Activated CD4-positive, alpha-beta memory T cell treated with anti-CD3 and anti-CD28 coated beads for 36 hours (primary cell): ENCODE measurements at regions of chr16 and their contacts with region 1.

Region 1: DNA sequence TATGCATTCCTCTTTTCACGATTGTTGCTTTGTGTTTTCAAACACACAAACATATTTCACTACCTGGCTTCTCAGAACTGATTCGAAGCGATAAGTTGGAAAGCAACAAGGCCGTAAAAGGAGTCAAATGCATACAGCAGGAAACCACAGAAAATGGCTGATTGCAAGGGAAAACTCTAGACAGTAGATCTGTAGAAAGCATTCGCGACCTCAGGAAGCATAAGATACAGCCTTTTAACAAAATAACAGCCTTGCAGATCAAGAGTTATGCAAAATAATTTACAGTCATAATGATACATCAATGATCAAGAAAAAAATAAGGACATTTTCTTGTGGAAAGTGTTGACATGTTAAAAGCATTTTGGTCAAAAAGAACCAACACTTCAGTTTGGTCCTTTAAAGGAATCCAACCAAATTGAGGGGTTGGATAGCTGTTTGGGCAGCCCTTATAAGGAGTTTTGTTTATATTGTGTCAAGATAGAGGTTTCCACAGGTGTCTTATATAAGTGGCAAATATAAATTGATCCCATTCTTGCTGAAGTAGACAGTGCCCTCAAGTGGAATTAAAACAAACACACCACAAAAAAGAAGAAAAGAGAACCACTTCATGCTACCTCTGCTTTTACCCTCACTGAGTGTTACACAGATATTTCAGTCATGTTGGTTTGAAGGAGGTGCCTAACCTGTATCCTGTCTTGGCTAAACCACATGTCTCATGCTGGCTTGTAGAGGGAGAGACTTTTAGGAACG is 5.5 kb downstream of the CYLD start:
- DNase-seq: no peak
- H3K4me3 Mint-ChIP-seq: peak overlapping the region; percentile 73
- H3K27ac Mint-ChIP-seq: peak overlapping the region; percentile 97
- H3K4me1 Mint-ChIP-seq: peaks cover 64% of the 10 kb centered on the region
- H3K27me3 Mint-ChIP-seq: no peaks in the 10 kb centered on the region

Region 2: DNA sequence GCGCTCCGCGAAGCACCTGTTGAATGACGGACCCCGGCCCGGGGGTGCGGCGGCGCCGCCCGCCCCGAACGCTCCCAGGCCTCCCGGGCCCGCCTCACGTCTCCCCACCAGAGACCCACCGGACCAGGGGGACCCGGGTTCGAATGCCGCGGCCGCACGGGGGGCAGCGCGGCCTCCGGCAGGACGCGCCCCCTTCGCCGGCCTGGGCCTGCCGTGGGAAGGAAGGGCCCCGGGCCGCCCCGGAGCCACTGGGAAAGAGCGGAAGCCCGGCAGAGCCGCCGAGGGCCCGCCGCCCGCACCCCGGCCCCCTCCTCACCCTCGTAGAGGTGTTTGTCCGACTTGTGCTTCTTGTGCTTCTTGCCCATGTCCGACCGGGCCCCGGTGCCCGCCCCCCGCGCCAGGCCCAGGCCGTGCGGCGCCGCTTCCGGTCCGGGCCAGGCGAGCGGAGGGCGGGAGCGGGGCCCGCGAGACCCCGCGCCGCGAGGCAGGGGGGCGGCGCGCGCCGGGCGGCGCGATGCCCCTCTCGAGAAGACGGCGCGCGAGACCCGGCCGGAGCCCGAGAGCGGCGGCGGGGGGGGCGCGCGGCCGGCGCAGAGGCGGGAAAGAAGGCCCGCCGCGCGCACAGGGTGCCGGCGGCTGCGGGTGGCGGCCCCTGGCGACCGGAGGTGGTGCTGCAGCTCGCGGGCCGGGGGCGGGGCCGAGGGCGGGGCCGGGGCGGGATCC is 378.8 kb before region 1 on chr16 and contains the start of gene BRD7:
- CTCF ChIA-PET with region 1: interaction called, 3 read pairs
- POLR2A ChIA-PET with region 1: no interaction called
- intact Hi-C with region 1: loop called (anchors 2 kb)
- DNase-seq: peak; percentile 80
- H3K4me3 Mint-ChIP-seq: peak within 1 kb of the TSS; percentile 89
- H3K27ac Mint-ChIP-seq: peak within 1 kb of the TSS; percentile 80
- H3K4me1 Mint-ChIP-seq: peaks cover 45% of the 10 kb centered on the region
- H3K27me3 Mint-ChIP-seq: no peaks in the 10 kb centered on the region
- total RNA-seq, gene BRD7: 87.9 to 103 TPM

Region 3: GRCh38 chr16:50671644-50672260 is 75.6 kb before region 1 on chr16:
- CTCF ChIA-PET with region 1: interaction called, 153 read pairs
- POLR2A ChIA-PET with region 1: interaction called, 6 read pairs
- intact Hi-C with region 1: loop called (anchors 1 kb)
- DNase-seq: peak; percentile 79
- H3K4me3 Mint-ChIP-seq: no peak overlapping the region
- H3K27ac Mint-ChIP-seq: peak overlapping the region; percentile 28
- H3K4me1 Mint-ChIP-seq: peaks cover 43% of the 10 kb centered on the region
- H3K27me3 Mint-ChIP-seq: no peaks in the 10 kb centered on the region

Region 4: DNA sequence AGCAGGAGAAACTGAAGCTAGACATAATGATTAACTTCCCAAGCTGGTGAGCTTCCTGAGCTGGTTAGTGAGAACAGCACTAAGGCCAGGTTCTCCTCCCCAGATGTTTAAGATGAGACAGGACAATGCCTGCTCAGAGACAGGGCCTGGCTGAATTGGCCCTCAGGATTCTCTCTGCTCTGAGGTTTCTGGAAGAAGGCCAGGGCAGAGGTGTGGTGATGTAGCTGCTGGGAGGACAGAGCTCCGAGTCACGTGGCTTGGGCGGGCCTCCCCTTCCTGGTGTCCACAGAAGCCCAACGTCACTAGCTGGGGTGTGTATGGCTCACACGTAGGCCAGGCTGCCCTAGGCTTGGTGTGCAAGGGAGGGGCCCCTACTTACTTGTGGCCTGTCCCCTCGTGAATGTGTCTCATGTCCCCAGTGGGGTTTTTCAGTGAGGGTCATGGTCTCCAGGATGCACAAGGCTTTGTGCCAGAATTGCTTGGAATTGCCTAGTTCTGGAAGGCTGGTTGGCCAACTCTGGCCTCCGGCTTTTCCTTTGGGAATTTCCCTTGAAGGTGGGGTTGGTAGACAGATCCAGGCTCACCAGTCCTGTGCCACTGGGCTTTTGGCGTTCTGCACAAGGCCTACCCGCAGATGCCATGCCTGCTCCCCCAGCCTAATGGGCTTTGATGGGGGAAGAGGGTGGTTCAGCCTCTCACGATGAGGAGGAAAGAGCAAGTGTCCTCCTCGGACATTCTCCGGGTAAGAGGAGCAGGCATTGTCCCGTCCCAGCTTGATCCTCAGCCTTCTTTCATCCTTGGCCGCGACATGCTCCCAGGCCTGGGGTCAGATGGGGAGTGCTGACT is 50.6 kb before region 1 on chr16:
- CTCF ChIA-PET with region 1: interaction called, 14 read pairs
- POLR2A ChIA-PET with region 1: interaction called, 81 read pairs
- intact Hi-C with region 1: loop called (anchors 2 kb)
- DNase-seq: peak; percentile 90
- H3K4me3 Mint-ChIP-seq: peak overlapping the region; percentile 78
- H3K27ac Mint-ChIP-seq: peak overlapping the region; percentile 98
- H3K4me1 Mint-ChIP-seq: peaks cover 89% of the 10 kb centered on the region
- H3K27me3 Mint-ChIP-seq: no peaks in the 10 kb centered on the region

Region 5: GRCh38 chr16:50781043-50781442 is 33.7 kb after region 1 on chr16:
- CTCF ChIA-PET with region 1: interaction called, 9 read pairs
- POLR2A ChIA-PET with region 1: interaction called, 5 read pairs
- intact Hi-C with region 1: loop called (anchors 1 kb)
- DNase-seq: peak; percentile 50
- H3K4me3 Mint-ChIP-seq: peak overlapping the region; percentile 33
- H3K27ac Mint-ChIP-seq: peak overlapping the region; percentile 78
- H3K4me1 Mint-ChIP-seq: peaks cover 70% of the 10 kb centered on the region
- H3K27me3 Mint-ChIP-seq: no peaks in the 10 kb centered on the region